Activated CD4-positive, alpha-beta memory T cell treated with anti-CD3 and anti-CD28 coated beads for 36 hours (primary cell): ENCODE measurements at regions of chr10 and their contacts with region 1.

Region 1: GRCh38 chr10:128211953-128212727 is 85.9 kb upstream of the MKI67 start:
- DNase-seq: peak; percentile 90
- H3K4me3 Mint-ChIP-seq: peak overlapping the region; percentile 68
- H3K27ac Mint-ChIP-seq: peak overlapping the region; percentile 62
- H3K4me1 Mint-ChIP-seq: peaks cover 9% of the 10 kb centered on the region
- H3K27me3 Mint-ChIP-seq: no peaks in the 10 kb centered on the region

Region 2: GRCh38 chr10:128087884-128088709 is 124.0 kb before region 1 on chr10:
- CTCF ChIA-PET with region 1: no interaction called
- POLR2A ChIA-PET with region 1: no interaction called
- intact Hi-C with region 1: loop called (anchors 5 kb)
- DNase-seq: no peak
- H3K4me3 Mint-ChIP-seq: no peak overlapping the region
- H3K27ac Mint-ChIP-seq: no peak overlapping the region
- H3K4me1 Mint-ChIP-seq: peaks cover 6% of the 10 kb centered on the region
- H3K27me3 Mint-ChIP-seq: no peaks in the 10 kb centered on the region

Region 3: DNA sequence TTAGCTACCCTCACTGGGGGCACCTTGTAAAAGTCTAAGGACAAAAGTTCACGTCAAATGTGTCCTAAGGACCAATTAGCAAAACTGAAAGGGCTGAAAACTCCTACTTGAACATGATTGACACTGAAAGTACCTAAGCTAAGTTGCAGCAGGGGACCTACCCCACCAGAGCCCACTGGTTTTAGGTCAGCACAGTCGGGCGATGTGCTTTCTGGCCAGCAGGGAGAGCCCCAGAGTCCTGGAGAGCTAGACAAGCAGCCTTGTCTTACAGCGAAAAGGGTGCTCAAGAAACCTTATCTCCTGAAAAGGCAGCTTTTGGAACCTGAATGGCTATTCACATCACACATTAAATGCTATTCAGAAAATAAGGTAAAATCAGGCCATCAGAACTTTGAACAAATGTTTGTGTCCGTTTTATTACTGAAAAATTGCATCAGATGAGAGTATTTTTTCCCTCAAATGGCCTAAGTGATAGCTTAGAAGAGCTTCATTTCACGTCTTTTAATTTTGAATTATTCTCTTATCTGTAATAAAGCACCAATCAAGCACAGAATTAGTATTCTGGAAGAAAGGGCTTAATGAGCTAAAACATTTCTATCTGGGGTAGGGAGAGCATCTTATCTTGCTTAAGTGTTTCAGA is 33.7 kb before region 1 on chr10:
- CTCF ChIA-PET with region 1: interaction called, 83 read pairs
- POLR2A ChIA-PET with region 1: interaction called, 3 read pairs
- intact Hi-C with region 1: loop called (anchors 1 kb)
- DNase-seq: peak; percentile 76
- H3K4me3 Mint-ChIP-seq: no peak overlapping the region
- H3K27ac Mint-ChIP-seq: no peak overlapping the region
- H3K4me1 Mint-ChIP-seq: peaks cover 33% of the 10 kb centered on the region
- H3K27me3 Mint-ChIP-seq: no peaks in the 10 kb centered on the region

Region 4: GRCh38 chr10:128186959-128187787 is 25.0 kb before region 1 on chr10:
- CTCF ChIA-PET with region 1: interaction called, 83 read pairs
- POLR2A ChIA-PET with region 1: interaction called, 3 read pairs
- intact Hi-C with region 1: no loop called
- DNase-seq: peak; percentile 54
- H3K4me3 Mint-ChIP-seq: peak overlapping the region; percentile 70
- H3K27ac Mint-ChIP-seq: peak overlapping the region; percentile 73
- H3K4me1 Mint-ChIP-seq: peaks cover 28% of the 10 kb centered on the region
- H3K27me3 Mint-ChIP-seq: no peaks in the 10 kb centered on the region

Region 5: GRCh38 chr10:128912568-128913311 is 700.6 kb after region 1 on chr10:
- CTCF ChIA-PET with region 1: no interaction called
- POLR2A ChIA-PET with region 1: no interaction called
- intact Hi-C with region 1: no loop called
- DNase-seq: no peak
- H3K4me3 Mint-ChIP-seq: no peak overlapping the region
- H3K27ac Mint-ChIP-seq: peak overlapping the region; percentile 43
- H3K4me1 Mint-ChIP-seq: peaks cover 13% of the 10 kb centered on the region
- H3K27me3 Mint-ChIP-seq: no peaks in the 10 kb centered on the region

Region 6: GRCh38 chr10:129971381-129972144 is 1759.4 kb after region 1 on chr10:
- CTCF ChIA-PET with region 1: no interaction called
- POLR2A ChIA-PET with region 1: no interaction called
- intact Hi-C with region 1: loop called (anchors 5 kb)
- DNase-seq: peak; percentile 68
- H3K4me3 Mint-ChIP-seq: peak overlapping the region; percentile 4
- H3K27ac Mint-ChIP-seq: peak overlapping the region; percentile 43
- H3K4me1 Mint-ChIP-seq: peaks cover 16% of the 10 kb centered on the region
- H3K27me3 Mint-ChIP-seq: peaks cover 69% of the 10 kb centered on the region